Naive thymus-derived CD4-positive, alpha-beta T cell (primary cell): ENCODE measurements at regions of chr3 and their contacts with region 1.

Region 1: DNA sequence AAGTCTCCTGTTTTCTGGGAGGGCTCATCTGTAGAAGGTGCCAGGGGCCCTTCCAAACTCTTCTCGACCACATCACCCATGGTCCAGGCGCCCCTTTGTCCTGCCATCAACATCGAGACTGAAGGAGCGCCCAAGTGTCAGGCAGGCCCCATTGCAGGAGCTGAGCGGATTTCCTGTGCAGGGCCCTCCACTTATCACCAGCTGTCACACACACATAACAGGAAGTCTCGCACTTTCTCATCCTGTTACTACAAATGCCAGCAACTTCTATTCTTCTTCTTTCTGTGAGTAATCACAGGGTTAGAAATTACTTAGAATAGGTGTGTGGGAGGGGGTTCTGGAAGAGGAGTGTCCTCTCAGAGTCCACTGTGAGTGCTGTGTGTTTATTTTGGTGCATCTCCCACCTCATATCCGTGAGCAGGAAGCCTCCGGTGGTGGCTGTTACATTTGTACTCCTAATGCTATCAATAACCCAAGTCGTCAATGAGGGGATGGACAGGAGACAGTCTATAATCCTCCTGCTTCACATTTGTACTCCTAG is at the start of gene KLHL6:
- DNase-seq: peak; percentile 47 to 81 (median 74)
- ATAC-seq: peak; percentile 93
- H3K4me3 ChIP-seq: peak within 1 kb of the TSS; percentile 82
- H3K4me3 Mint-ChIP-seq: peak within 1 kb of the TSS; percentile 95 to 100 (median 98)
- H3K27ac ChIP-seq: peak within 1 kb of the TSS; percentile 78
- H3K27ac Mint-ChIP-seq: peak within 1 kb of the TSS; percentile 95 to 100 (median 98)
- H3K4me1 ChIP-seq: peaks cover 15 to 17% of the 10 kb centered on the region in 2 donors
- H3K4me1 Mint-ChIP-seq: peaks cover 46 to 58% (median 50%) of the 10 kb centered on the region in 7 donors
- H3K27me3 ChIP-seq: no peaks in the 10 kb centered on the region
- H3K27me3 Mint-ChIP-seq: no peaks in the 10 kb centered on the region
- total RNA-seq, gene KLHL6: 37.7 to 72.9 (median 41.5) TPM

Region 2: DNA sequence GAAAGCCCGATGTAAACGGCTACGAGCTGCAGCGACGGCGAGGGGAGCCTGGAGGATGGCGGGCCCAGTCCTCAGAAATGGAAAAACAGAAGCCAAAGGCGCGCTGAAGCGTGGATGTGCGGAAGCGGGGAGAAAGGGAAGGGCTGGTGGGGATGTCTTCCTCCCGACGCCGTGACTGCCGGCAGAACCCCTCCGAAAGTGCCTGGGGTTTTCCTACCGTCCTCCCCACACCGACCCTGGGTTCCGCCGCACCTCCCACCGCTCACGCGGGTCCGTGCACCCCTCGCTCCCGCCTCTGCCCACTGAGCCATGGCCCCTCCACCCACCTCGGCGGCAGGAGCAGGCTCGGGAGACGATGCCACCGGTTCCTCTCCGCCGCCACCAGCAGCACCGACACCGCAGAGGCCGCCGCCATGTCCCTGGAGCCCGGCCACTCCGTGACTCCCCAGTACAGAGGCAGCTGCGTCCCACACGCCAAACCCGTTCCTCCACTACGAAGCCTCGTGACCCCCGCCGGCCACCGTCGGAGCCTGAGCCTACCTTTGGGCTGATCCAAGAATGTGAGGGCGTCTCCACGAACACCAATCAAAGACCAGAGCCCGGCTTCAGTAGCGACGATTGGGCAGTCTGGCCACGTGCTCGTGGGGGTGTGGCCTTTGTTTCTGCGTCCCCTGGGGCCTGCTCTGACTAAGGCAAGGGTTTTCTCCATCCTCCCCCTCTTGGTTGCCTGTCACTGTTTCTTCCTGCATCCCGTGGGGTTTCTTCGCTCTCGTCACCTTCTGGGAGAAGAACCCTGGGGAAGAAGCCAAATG is 456.4 kb before region 1 on chr3 and contains the start of gene MCCC1:
- CTCF ChIA-PET with region 1: no interaction called
- POLR2A ChIA-PET with region 1: no interaction called
- intact Hi-C with region 1: loop called in 1 of 2 experiments (anchors 10 kb)
- DNase-seq: peak; percentile 82 to 98 (median 97)
- ATAC-seq: peak; percentile 99
- H3K4me3 ChIP-seq: peak within 1 kb of the TSS; percentile 73
- H3K4me3 Mint-ChIP-seq: peak within 1 kb of the TSS; percentile 87 to 98 (median 97)
- H3K27ac ChIP-seq: peak within 1 kb of the TSS; percentile 83
- H3K27ac Mint-ChIP-seq: peak within 1 kb of the TSS; percentile 90 to 99 (median 97)
- H3K4me1 ChIP-seq: peaks cover 7 to 10% of the 10 kb centered on the region in 2 donors
- H3K4me1 Mint-ChIP-seq: peaks cover 18 to 52% (median 43%) of the 10 kb centered on the region in 7 donors
- H3K27me3 ChIP-seq: no peaks in the 10 kb centered on the region
- H3K27me3 Mint-ChIP-seq: no peaks in the 10 kb centered on the region
- total RNA-seq, gene MCCC1: 17.7 to 37.5 (median 31.8) TPM

Region 3: GRCh38 chr3:183427876-183428446 is 127.7 kb before region 1 on chr3:
- CTCF ChIA-PET with region 1: no interaction called
- POLR2A ChIA-PET with region 1: no interaction called
- intact Hi-C with region 1: loop called in 1 of 2 experiments (anchors 2 kb)
- DNase-seq: peak in 5 of 9 donors; percentile 3 to 55 (median 4)
- ATAC-seq: peak; percentile 34
- H3K4me3 ChIP-seq: peak overlapping the region; percentile 77
- H3K4me3 Mint-ChIP-seq: peak overlapping the region; percentile 66 to 90 (median 80)
- H3K27ac ChIP-seq: no peak overlapping the region
- H3K27ac Mint-ChIP-seq: peak overlapping the region in 2 of 9 donors; percentile 20 to 61
- H3K4me1 ChIP-seq: peaks cover 0 to 8% of the 10 kb centered on the region in 2 donors
- H3K4me1 Mint-ChIP-seq: peaks cover 0 to 28% (median 5%) of the 10 kb centered on the region in 7 donors
- H3K27me3 ChIP-seq: no peaks in the 10 kb centered on the region
- H3K27me3 Mint-ChIP-seq: peaks cover 0 to 29% (median 2%) of the 10 kb centered on the region in 5 donors

Region 4: DNA sequence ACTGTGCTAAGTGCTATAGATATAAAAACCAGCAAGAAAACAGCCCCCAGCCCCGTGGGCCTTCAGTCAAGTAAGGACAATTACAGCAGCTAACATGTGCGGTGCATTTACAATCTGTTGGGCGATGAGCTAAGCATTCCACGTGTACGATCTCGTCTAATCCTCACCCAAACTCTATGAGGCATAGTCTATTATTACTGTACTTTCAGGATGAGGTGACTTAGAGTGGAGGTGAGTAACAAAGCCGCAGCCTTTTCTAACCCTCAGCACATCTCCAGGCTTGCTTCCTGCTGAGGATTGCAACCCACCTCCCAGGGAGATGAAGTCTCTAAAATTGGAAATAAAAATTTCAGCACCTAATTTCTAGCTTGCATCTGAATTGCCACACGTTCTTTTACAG is 74.0 kb before region 1 on chr3:
- CTCF ChIA-PET with region 1: interaction called, 5 read pairs
- POLR2A ChIA-PET with region 1: no interaction called
- intact Hi-C with region 1: loop called in 1 of 2 experiments (anchors 2 kb)
- DNase-seq: no peak
- ATAC-seq: no peak
- H3K4me3 ChIP-seq: no peak overlapping the region
- H3K4me3 Mint-ChIP-seq: no peak overlapping the region
- H3K27ac ChIP-seq: no peak overlapping the region
- H3K27ac Mint-ChIP-seq: peak overlapping the region in 2 of 9 donors; percentile 21 to 57
- H3K4me1 ChIP-seq: no peaks in the 10 kb centered on the region
- H3K4me1 Mint-ChIP-seq: peaks cover 0 to 22% (median 7%) of the 10 kb centered on the region in 7 donors
- H3K27me3 ChIP-seq: no peaks in the 10 kb centered on the region
- H3K27me3 Mint-ChIP-seq: no peaks in the 10 kb centered on the region

Region 5: GRCh38 chr3:183527428-183528379 is 27.9 kb before region 1 on chr3:
- CTCF ChIA-PET with region 1: no interaction called
- POLR2A ChIA-PET with region 1: interaction called, 4 read pairs
- intact Hi-C with region 1: loop called in 1 of 2 experiments (anchors 1 kb)
- DNase-seq: no peak
- ATAC-seq: peak; percentile 45
- H3K4me3 ChIP-seq: no peak overlapping the region
- H3K4me3 Mint-ChIP-seq: peak overlapping the region in 2 of 10 donors; percentile 20 to 86
- H3K27ac ChIP-seq: no peak overlapping the region
- H3K27ac Mint-ChIP-seq: peak overlapping the region; percentile 48 to 88 (median 71)
- H3K4me1 ChIP-seq: peaks cover 0 to 5% of the 10 kb centered on the region in 2 donors
- H3K4me1 Mint-ChIP-seq: peaks cover 35 to 65% (median 57%) of the 10 kb centered on the region in 7 donors
- H3K27me3 ChIP-seq: no peaks in the 10 kb centered on the region
- H3K27me3 Mint-ChIP-seq: no peaks in the 10 kb centered on the region

Region 6: GRCh38 chr3:183584246-183584913 is 28.8 kb after region 1 on chr3:
- CTCF ChIA-PET with region 1: interaction called, 3 read pairs
- POLR2A ChIA-PET with region 1: interaction called, 6 read pairs
- intact Hi-C with region 1: loop called (anchors 1 to 2 kb)
- DNase-seq: no peak
- ATAC-seq: no peak
- H3K4me3 ChIP-seq: no peak overlapping the region
- H3K4me3 Mint-ChIP-seq: peak overlapping the region in 1 of 10 donors; percentile 24
- H3K27ac ChIP-seq: no peak overlapping the region
- H3K27ac Mint-ChIP-seq: peak overlapping the region in 8 of 9 donors; percentile 37 to 89 (median 70)
- H3K4me1 ChIP-seq: peaks cover 11 to 33% of the 10 kb centered on the region in 2 donors
- H3K4me1 Mint-ChIP-seq: peaks cover 31 to 72% (median 56%) of the 10 kb centered on the region in 7 donors
- H3K27me3 ChIP-seq: no peaks in the 10 kb centered on the region
- H3K27me3 Mint-ChIP-seq: peaks cover 0 to 3% (median 0%) of the 10 kb centered on the region in 5 donors

Region 7: DNA sequence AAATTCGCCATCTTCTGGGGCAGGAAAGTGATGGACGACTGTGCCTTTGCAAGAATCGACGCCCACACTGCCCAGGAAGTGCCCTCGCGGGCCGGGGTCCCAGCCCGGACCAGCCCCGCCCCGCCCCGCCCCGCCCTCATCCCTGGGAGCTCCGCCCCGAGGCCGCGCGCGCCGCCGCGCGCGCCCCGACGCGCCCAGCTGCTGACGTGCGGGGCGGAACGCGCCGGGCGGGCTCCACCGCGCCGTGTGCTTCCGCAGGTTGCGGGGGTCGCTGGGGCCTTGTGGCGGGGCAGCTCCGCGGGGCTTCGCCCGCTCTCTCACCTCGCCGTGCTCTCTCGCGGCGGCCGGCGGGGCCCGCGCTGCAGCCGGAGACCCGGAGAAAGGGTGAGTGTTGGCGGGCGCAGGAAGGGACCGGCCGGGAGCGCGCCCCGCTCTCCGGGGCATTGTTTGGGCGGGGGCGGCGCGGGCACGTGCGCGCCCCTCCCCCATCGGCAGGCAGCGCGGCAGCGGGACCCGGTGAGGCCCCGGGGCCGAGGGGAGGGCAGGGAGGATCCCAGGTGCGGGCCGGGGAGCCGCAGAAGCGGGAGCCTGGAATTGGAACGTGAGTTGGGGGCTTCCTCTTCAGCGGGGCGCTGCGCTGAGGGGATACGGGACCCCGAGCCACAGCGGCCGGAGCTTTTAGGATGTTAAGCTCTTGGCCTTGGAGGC is 142.2 kb after region 1 on chr3 and contains the start of gene YEATS2:
- CTCF ChIA-PET with region 1: no interaction called
- POLR2A ChIA-PET with region 1: interaction called, 3 read pairs
- intact Hi-C with region 1: loop called (anchors 1 kb)
- DNase-seq: peak; percentile 60 to 81 (median 74)
- ATAC-seq: peak; percentile 95
- H3K4me3 ChIP-seq: peak within 1 kb of the TSS; percentile 89
- H3K4me3 Mint-ChIP-seq: peak within 1 kb of the TSS; percentile 84 to 99 (median 94)
- H3K27ac ChIP-seq: peak within 1 kb of the TSS; percentile 84
- H3K27ac Mint-ChIP-seq: peak within 1 kb of the TSS; percentile 74 to 97 (median 90)
- H3K4me1 ChIP-seq: peaks cover 9 to 18% of the 10 kb centered on the region in 2 donors
- H3K4me1 Mint-ChIP-seq: peaks cover 32 to 50% (median 40%) of the 10 kb centered on the region in 7 donors
- H3K27me3 ChIP-seq: no peaks in the 10 kb centered on the region
- H3K27me3 Mint-ChIP-seq: no peaks in the 10 kb centered on the region
- total RNA-seq, gene YEATS2: 20.6 to 61.4 (median 21.9) TPM